ENCODE measurements at regions of chr6 and their contacts with region 1.

Region 1: GRCh38 chr6:144582939-144583613 is 297.9 kb downstream of the UTRN start:
- DNase-seq: peak; percentile 63
- H3K4me3 Mint-ChIP-seq: peak overlapping the region; percentile 81
- H3K27ac Mint-ChIP-seq: peak overlapping the region; percentile 93
- H3K4me1 Mint-ChIP-seq: peaks cover 66% of the 10 kb centered on the region
- H3K27me3 Mint-ChIP-seq: no peaks in the 10 kb centered on the region

Region 2: DNA sequence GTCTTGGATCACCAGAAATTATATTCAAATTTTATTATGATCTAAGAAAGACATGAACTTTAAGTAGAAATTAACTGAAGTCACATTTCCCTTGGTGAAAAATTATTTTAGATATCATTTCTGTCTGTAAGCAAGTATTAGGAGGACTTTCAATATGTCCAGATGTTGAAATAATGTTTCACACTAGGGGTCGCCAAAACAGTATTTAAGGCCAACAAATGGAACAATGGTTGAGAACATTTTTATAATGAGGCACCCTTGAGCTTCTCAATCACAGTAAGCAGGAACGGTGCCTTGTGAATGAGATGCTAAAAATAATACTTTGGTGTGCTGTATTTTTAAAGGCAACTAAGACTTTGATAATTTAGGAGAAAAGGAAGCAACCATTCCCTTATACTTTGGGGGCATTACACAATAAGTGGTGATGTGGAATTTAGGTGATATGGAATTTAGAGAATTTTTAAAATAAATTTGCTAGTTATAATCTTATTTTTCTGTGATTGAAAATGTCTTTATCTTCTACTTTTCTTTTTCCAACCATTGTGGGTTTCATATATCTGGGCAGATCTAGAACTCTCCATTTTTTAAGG is 478.1 kb before region 1 on chr6:
- intact Hi-C with region 1: loop called (anchors 5 kb)
- DNase-seq: no peak
- H3K4me3 Mint-ChIP-seq: no peak overlapping the region
- H3K27ac Mint-ChIP-seq: no peak overlapping the region
- H3K4me1 Mint-ChIP-seq: peaks cover 9% of the 10 kb centered on the region
- H3K27me3 Mint-ChIP-seq: peaks cover 6% of the 10 kb centered on the region

Region 3: DNA sequence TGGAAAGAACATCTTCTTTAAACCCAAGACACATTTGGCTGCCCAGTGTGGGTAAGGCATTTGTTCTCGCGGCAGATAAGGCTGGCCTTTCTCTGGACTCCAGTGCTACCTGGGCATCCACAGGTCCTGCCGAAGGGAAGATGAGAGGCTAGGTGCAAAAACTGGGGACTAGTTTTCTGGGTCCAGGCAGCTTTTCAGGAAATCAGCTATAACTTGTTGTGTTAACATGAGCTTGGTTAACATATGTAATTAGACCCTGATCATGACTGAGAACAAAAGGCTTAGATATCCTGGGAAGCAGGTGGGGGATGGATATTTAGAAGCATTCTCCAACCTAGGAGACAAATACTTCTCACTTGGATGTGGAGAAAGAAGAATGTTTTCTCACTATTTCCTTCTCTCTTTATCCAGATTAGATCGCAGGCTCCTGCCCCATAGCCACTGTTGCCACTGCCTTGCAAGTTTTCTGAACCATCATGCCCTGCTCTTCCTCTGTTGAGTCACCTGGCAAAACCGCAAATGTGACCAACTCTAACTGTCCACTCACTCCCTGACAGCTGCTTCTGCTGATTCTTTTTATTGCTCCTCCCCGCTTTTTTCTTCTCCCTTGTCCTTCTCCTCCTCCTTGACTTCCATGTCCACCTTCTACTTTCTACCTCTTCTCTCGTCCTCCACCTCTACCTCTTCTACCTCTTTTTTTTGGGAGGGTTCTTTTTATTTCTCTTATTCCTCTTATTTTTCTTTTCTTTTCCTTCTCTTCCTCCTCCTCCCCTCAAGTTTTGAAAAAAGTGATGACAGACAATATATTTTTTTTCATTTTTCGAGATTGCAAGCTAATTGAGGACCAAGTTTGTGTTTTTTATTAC is 39.8 kb before region 1 on chr6:
- intact Hi-C with region 1: no loop called
- DNase-seq: no peak
- H3K4me3 Mint-ChIP-seq: no peak overlapping the region
- H3K27ac Mint-ChIP-seq: peak overlapping the region; percentile 34
- H3K4me1 Mint-ChIP-seq: peaks cover 15% of the 10 kb centered on the region
- H3K27me3 Mint-ChIP-seq: no peaks in the 10 kb centered on the region

Region 4: DNA sequence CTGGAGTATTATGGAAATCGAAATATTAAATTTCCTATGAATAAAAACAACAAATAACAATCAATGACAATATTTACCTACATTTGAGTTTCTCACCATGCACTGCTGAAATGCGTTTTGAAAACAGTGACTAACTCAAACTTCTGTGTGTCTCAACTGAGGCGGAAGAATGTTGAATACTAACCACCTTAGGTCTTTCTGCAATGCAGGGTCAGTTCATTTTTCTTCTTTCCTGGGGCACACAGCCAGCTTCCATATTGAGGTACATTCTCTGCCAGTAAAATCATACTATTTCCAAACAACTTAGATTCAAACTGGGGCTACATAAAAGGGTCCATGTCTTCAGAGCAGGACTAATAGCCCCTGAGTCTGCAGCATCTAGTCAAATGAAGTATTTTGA is 12.2 kb after region 1 on chr6:
- intact Hi-C with region 1: loop called (anchors 1 kb)
- DNase-seq: no peak
- H3K4me3 Mint-ChIP-seq: no peak overlapping the region
- H3K27ac Mint-ChIP-seq: no peak overlapping the region
- H3K4me1 Mint-ChIP-seq: peaks cover 33% of the 10 kb centered on the region
- H3K27me3 Mint-ChIP-seq: no peaks in the 10 kb centered on the region

Region 5: GRCh38 chr6:144630857-144631256 is 47.8 kb after region 1 on chr6:
- intact Hi-C with region 1: no loop called
- DNase-seq: no peak
- H3K4me3 Mint-ChIP-seq: no peak overlapping the region
- H3K27ac Mint-ChIP-seq: no peak overlapping the region
- H3K4me1 Mint-ChIP-seq: peaks cover 1% of the 10 kb centered on the region
- H3K27me3 Mint-ChIP-seq: no peaks in the 10 kb centered on the region

Region 6: GRCh38 chr6:144726129-144726522 is 143.1 kb after region 1 on chr6:
- intact Hi-C with region 1: loop called (anchors 2 kb)
- DNase-seq: no peak
- H3K4me3 Mint-ChIP-seq: no peak overlapping the region
- H3K27ac Mint-ChIP-seq: peak overlapping the region; percentile 60
- H3K4me1 Mint-ChIP-seq: peaks cover 41% of the 10 kb centered on the region
- H3K27me3 Mint-ChIP-seq: no peaks in the 10 kb centered on the region

Region 7: DNA sequence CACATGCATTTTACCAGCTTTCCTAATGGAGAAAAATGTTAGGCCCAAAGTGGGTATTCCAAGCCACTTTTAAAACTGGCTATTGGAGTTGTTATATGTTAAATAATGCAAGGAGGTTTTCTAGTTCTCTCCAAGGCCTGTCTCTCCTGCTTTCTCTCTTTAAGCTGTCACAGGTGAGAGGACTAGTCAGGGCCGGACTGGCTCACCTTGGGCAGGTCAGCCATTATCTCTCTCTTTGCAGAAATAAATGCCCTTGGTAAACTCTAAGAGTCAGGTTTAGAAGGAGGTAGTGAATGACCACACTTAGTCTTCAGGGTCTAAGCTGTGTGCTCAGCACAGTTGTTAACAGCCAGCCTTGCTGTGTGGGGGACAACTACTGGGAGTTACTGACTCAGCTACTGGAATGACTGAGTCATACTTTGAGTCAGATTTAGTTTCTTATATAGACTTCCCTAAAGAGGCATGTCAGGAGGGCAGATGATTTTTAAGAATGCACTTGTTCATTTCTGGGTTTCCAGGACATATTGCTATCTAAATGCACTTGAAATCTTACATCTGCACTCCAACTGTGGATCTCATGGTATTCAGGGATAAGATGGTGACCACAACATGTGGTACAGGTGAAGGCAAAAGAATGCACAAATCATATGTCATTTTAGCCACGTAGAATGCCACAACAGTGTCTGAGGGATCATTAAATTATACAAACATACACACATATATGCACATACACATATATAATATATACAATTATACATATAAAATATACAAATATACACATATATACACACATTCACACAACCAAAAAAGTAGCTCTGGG is 432.9 kb after region 1 on chr6:
- intact Hi-C with region 1: loop called (anchors 2 kb)
- DNase-seq: peak; percentile 14
- H3K4me3 Mint-ChIP-seq: no peak overlapping the region
- H3K27ac Mint-ChIP-seq: peak overlapping the region; percentile 70
- H3K4me1 Mint-ChIP-seq: peaks cover 47% of the 10 kb centered on the region
- H3K27me3 Mint-ChIP-seq: no peaks in the 10 kb centered on the region

Region 8: GRCh38 chr6:145823328-145823944 is 1240.4 kb after region 1 on chr6:
- intact Hi-C with region 1: loop called (anchors 10 kb)
- DNase-seq: no peak
- H3K4me3 Mint-ChIP-seq: no peak overlapping the region
- H3K27ac Mint-ChIP-seq: peak overlapping the region; percentile 46
- H3K4me1 Mint-ChIP-seq: peaks cover 42% of the 10 kb centered on the region
- H3K27me3 Mint-ChIP-seq: no peaks in the 10 kb centered on the region